SK-N-SH (cell line): ENCODE measurements at regions of chr9 and their contacts with region 1.

Region 1: DNA sequence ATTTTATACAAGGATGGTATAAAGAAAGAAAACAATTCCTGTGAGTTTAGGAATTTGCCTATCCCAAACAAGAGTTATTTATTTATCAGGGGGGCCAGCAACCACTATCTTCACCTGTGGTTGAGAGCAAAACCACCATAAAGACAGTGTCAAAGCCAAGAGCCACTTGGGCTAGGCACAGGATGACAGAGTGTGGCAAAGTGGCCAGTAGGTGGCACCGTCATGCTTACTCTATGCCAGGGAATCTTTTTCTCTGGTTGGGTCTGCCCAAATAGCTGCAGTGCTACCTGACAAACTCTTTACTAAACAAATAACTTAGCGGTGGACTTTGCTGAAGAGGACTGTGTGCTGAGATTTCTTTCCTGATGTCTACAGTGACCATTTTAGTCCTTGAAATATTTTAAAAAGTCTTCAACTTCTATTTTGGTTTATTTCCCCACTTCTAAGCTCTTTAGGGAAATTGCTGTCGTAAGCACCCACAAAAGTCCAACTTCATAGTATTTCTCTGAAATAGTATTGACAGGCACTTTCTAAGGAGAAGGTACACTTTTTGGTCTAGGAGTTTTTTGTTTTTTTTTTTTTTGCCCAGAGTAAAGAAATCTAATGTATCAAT is 285.0 kb downstream of the RFX3 start:
- DNase-seq: peak; percentile 46
- H3K4me3 ChIP-seq: no peak overlapping the region; a peak in 1 of 4 replicates
- H3K27ac ChIP-seq: no peak overlapping the region
- H3K4me1 ChIP-seq: peaks cover 0 to 4% of the 10 kb centered on the region in 2 experiments; a peak in 1 of 4 replicates
- H3K27me3 ChIP-seq: no peaks in the 10 kb centered on the region
- CTCF ChIP-seq: peak; percentile 90
- EP300 ChIP-seq: no peak
- RAD21 ChIP-seq: peak; percentile 88

Region 2: GRCh38 chr9:3074247-3074646 is 166.5 kb before region 1 on chr9:
- CTCF ChIA-PET with region 1: no interaction called
- POLR2A ChIA-PET with region 1: no interaction called
- DNase-seq: no peak
- H3K4me3 ChIP-seq: no peak overlapping the region
- H3K27ac ChIP-seq: no peak overlapping the region
- H3K4me1 ChIP-seq: no peaks in the 10 kb centered on the region
- H3K27me3 ChIP-seq: no peaks in the 10 kb centered on the region
- CTCF ChIP-seq: no peak
- EP300 ChIP-seq: no peak
- RAD21 ChIP-seq: no peak

Region 3: GRCh38 chr9:3224931-3225330 is 15.8 kb before region 1 on chr9:
- CTCF ChIA-PET with region 1: interaction called, 24 read pairs
- POLR2A ChIA-PET with region 1: no interaction called
- DNase-seq: no peak
- H3K4me3 ChIP-seq: no peak overlapping the region
- H3K27ac ChIP-seq: no peak overlapping the region
- H3K4me1 ChIP-seq: peaks cover 0 to 2% of the 10 kb centered on the region in 2 experiments; a peak in 2 of 4 replicates
- H3K27me3 ChIP-seq: no peaks in the 10 kb centered on the region
- CTCF ChIP-seq: no peak
- EP300 ChIP-seq: no peak
- RAD21 ChIP-seq: no peak

Region 4: GRCh38 chr9:3441197-3441816 is 200.5 kb after region 1 on chr9:
- CTCF ChIA-PET with region 1: interaction called, 29 read pairs
- POLR2A ChIA-PET with region 1: no interaction called
- DNase-seq: peak; percentile 28
- H3K4me3 ChIP-seq: no peak overlapping the region; a peak in 1 of 4 replicates
- H3K27ac ChIP-seq: no peak overlapping the region
- H3K4me1 ChIP-seq: peaks cover 0 to 2% of the 10 kb centered on the region in 2 experiments; a peak in 2 of 4 replicates
- H3K27me3 ChIP-seq: no peaks in the 10 kb centered on the region
- CTCF ChIP-seq: peak; percentile 73
- EP300 ChIP-seq: no peak
- RAD21 ChIP-seq: peak; percentile 68